ENCODE measurements at regions of chr6 and their contacts with region 1.

Region 1: DNA sequence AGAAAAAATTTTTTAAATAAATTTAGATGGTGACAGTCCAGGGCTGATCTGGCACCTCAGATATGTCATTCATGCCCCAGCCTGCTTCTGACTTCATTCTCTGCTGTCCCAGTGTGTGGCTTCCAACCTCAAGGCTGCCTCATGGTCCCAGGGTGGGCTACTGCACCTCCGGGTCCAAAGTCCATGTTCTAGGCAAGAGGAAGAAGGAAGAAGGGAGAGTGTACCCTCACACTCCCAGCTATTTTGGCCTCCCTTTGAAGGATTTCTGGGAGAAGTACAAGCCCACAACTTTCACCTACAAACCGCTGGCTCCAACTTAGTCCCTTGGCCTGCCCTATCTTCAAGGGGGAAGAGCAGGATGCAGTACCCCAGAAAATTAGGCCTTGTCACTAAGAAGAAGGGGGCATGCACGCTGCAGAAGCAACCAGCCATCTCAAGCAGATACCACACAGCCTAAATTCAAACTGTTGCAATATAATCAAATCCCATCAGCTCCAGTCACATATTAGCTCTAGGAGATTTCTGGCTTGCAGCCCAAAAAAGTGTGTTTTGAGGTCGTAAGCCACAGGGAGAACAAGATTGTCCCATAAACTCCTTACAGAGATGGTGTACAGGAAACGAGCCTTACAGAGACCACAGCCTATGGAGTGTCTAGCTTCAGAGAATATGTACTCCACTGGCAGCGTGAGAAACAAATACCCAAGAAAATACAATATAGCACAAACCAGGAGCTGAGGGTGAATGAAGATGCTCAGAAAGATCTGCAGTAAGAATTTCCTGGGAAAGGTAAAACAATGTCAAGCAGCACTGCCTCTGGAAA is 906 bp upstream of the BTN3A2 start:
- DNase-seq: no peak
- ATAC-seq: no peak
- H3K4me3 ChIP-seq: peak overlapping the region; percentile 49 to 70 (median 69)
- H3K27ac ChIP-seq: peak overlapping the region; percentile 82 to 89 (median 86)
- H3K4me1 ChIP-seq: peaks cover 8% of the 10 kb centered on the region in 2 donors
- H3K27me3 ChIP-seq: no peaks in the 10 kb centered on the region
- CTCF ChIP-seq: no peak
- POLR2A ChIP-seq: no peak

Region 2: GRCh38 chr6:26383624-26384417 is 19.7 kb after region 1 on chr6:
- in situ Hi-C with region 1: no loop called
- intact Hi-C with region 1: loop called (anchors 2 kb)
- DNase-seq: no peak
- ATAC-seq: peak in 1 of 2 donors; percentile 37
- H3K4me3 ChIP-seq: peak overlapping the region; percentile 63 to 79 (median 72)
- H3K27ac ChIP-seq: peak overlapping the region; percentile 70 to 77 (median 74)
- H3K4me1 ChIP-seq: no peaks in the 10 kb centered on the region
- H3K27me3 ChIP-seq: no peaks in the 10 kb centered on the region
- CTCF ChIP-seq: no peak
- POLR2A ChIP-seq: no peak

Region 3: GRCh38 chr6:26473758-26474438 is 109.8 kb after region 1 on chr6:
- in situ Hi-C with region 1: no loop called
- intact Hi-C with region 1: loop called (anchors 5 kb)
- DNase-seq: peak; percentile 41 to 62
- ATAC-seq: peak; percentile 97 to 98
- H3K4me3 ChIP-seq: peak overlapping the region; percentile 57 to 64 (median 58)
- H3K27ac ChIP-seq: peak overlapping the region; percentile 75 to 80 (median 78)
- H3K4me1 ChIP-seq: no peaks in the 10 kb centered on the region
- H3K27me3 ChIP-seq: no peaks in the 10 kb centered on the region
- CTCF ChIP-seq: no peak
- POLR2A ChIP-seq: peak; percentile 54 to 79